ENCODE measurements at regions of chr21 and their contacts with region 1.

Region 1: GRCh38 chr21:31678478-31678877 is 19.0 kb downstream of the SOD1 start:
- DNase-seq: no peak
- ATAC-seq: no peak
- H3K4me3 ChIP-seq: no peak overlapping the region
- H3K4me3 Mint-ChIP-seq: no peak overlapping the region
- H3K27ac ChIP-seq: no peak overlapping the region
- H3K27ac Mint-ChIP-seq: no peak overlapping the region
- H3K4me1 ChIP-seq: no peaks in the 10 kb centered on the region
- H3K4me1 Mint-ChIP-seq: peaks cover 0 to 5% (median 0%) of the 10 kb centered on the region in 7 donors
- H3K27me3 ChIP-seq: no peaks in the 10 kb centered on the region
- H3K27me3 Mint-ChIP-seq: no peaks in the 10 kb centered on the region

Region 2: GRCh38 chr21:31335957-31336738 is 342.3 kb before region 1 on chr21:
- CTCF ChIA-PET with region 1: no interaction called
- POLR2A ChIA-PET with region 1: no interaction called
- intact Hi-C with region 1: no loop called
- DNase-seq: peak in 1 of 9 donors; percentile 36
- ATAC-seq: no peak
- H3K4me3 ChIP-seq: no peak overlapping the region
- H3K4me3 Mint-ChIP-seq: no peak overlapping the region
- H3K27ac ChIP-seq: no peak overlapping the region
- H3K27ac Mint-ChIP-seq: peak overlapping the region in 1 of 9 donors; percentile 16
- H3K4me1 ChIP-seq: no peaks in the 10 kb centered on the region
- H3K4me1 Mint-ChIP-seq: peaks cover 0 to 60% (median 11%) of the 10 kb centered on the region in 7 donors
- H3K27me3 ChIP-seq: no peaks in the 10 kb centered on the region
- H3K27me3 Mint-ChIP-seq: peaks cover 2 to 12% (median 9%) of the 10 kb centered on the region in 5 donors

Region 3: GRCh38 chr21:31665397-31665796 is 13.1 kb before region 1 on chr21:
- CTCF ChIA-PET with region 1: no interaction called
- POLR2A ChIA-PET with region 1: interaction called, 4 read pairs
- intact Hi-C with region 1: loop called in 1 of 2 experiments (anchors 2 kb)
- DNase-seq: peak in 3 of 9 donors; percentile 12 to 38 (median 18)
- ATAC-seq: peak; percentile 57
- H3K4me3 ChIP-seq: no peak overlapping the region
- H3K4me3 Mint-ChIP-seq: peak overlapping the region; percentile 38 to 95 (median 68)
- H3K27ac ChIP-seq: peak overlapping the region; percentile 61
- H3K27ac Mint-ChIP-seq: peak overlapping the region; percentile 63 to 83 (median 75)
- H3K4me1 ChIP-seq: peaks cover 18 to 46% of the 10 kb centered on the region in 2 donors
- H3K4me1 Mint-ChIP-seq: peaks cover 47 to 84% (median 74%) of the 10 kb centered on the region in 7 donors
- H3K27me3 ChIP-seq: no peaks in the 10 kb centered on the region
- H3K27me3 Mint-ChIP-seq: no peaks in the 10 kb centered on the region

Region 4: GRCh38 chr21:31866077-31866511 is 187.6 kb after region 1 on chr21:
- CTCF ChIA-PET with region 1: no interaction called
- POLR2A ChIA-PET with region 1: no interaction called
- intact Hi-C with region 1: no loop called
- DNase-seq: peak; percentile 16 to 70 (median 47)
- ATAC-seq: peak; percentile 72
- H3K4me3 ChIP-seq: no peak overlapping the region
- H3K4me3 Mint-ChIP-seq: no peak overlapping the region
- H3K27ac ChIP-seq: no peak overlapping the region
- H3K27ac Mint-ChIP-seq: no peak overlapping the region
- H3K4me1 ChIP-seq: no peaks in the 10 kb centered on the region
- H3K4me1 Mint-ChIP-seq: no peaks in the 10 kb centered on the region
- H3K27me3 ChIP-seq: no peaks in the 10 kb centered on the region
- H3K27me3 Mint-ChIP-seq: peaks cover 13 to 30% (median 23%) of the 10 kb centered on the region in 5 donors

Region 5: DNA sequence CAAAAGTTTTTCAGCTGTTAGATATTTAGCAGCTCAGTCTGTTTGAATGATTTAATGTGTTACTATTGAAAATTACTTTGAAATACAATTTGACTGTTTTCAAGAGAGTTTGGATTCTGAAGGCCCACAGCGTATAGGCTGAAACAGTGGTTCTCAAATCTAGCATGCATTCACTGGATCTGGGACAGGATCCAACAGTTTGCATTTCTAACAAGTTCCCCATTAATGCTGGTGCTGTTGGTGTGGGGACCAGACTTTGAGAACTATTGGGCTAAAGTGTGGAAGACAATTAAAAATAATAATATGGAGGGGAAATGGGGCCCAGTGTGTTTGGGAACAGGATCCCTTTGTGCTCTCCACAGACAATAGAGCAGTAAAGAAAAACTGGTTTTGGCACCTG is 1995.7 kb after region 1 on chr21:
- CTCF ChIA-PET with region 1: no interaction called
- POLR2A ChIA-PET with region 1: no interaction called
- intact Hi-C with region 1: no loop called
- DNase-seq: no peak
- ATAC-seq: no peak
- H3K4me3 ChIP-seq: no peak overlapping the region
- H3K4me3 Mint-ChIP-seq: no peak overlapping the region
- H3K27ac ChIP-seq: no peak overlapping the region
- H3K27ac Mint-ChIP-seq: no peak overlapping the region
- H3K4me1 ChIP-seq: no peaks in the 10 kb centered on the region
- H3K4me1 Mint-ChIP-seq: peaks cover 0 to 1% (median 0%) of the 10 kb centered on the region in 7 donors
- H3K27me3 ChIP-seq: no peaks in the 10 kb centered on the region
- H3K27me3 Mint-ChIP-seq: peaks cover 0 to 4% (median 3%) of the 10 kb centered on the region in 5 donors

Measured in naive thymus-derived CD4-positive, alpha-beta T cell (primary cell).